GM12878 (cell line): ENCODE measurements at regions of chr3 and their contacts with region 1.

Region 1: DNA sequence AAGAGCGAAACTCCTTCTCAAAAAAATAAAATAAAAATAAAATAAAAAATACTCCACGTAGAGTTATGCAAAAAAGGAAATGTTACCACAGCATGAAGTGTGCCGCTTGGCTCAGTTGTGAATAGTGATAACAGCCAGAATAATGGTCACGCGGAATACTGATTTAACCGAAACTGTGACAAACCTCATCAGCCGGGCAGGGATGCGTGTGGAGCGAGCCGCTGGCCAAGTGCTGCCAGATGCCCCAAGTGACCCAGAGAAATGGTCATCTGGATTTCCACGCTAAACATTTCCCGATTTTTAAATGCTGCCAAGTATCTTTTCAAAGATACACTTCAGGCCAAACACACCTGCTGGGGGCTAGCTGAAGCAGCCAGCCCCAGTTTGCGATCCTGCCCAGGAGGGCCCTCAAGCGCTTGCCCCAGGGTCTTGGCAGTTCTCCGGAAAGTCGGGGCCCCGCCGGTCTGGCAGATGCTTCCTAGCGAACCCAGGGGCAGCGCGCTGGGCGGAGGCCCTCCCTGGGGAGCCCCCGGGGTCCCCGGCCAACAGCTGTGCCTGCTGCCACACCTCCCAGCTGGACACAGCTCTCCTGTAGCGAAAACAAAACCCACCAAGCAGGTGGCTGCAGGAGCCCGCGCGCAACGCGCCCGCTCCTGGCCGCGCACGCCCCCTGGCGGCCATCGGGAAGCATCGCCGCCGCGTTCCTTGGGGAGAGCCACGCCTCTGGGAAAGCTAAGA is 35.1 kb downstream of the CMTM6 start:
- DNase-seq: no peak
- ATAC-seq: peak; percentile 80
- H3K4me3 ChIP-seq: peak overlapping the region; percentile 43; the same call in 1 of the 2 replicates
- H3K27ac ChIP-seq: no peak overlapping the region
- H3K4me1 ChIP-seq: peaks cover 39% of the 10 kb centered on the region
- H3K27me3 ChIP-seq: no peaks in the 10 kb centered on the region
- CTCF ChIP-seq: peak; percentile 95 to 96 (median 96); a peak in 5 of 6 replicates
- EP300 ChIP-seq: no peak
- POLR2A ChIP-seq: no peak
- RAD21 ChIP-seq: peak; percentile 96

Region 2: GRCh38 chr3:32374788-32375595 is 92.5 kb before region 1 on chr3:
- CTCF ChIA-PET with region 1: interaction called, 201 read pairs
- POLR2A ChIA-PET with region 1: interaction called, 5 read pairs
- RAD21 ChIA-PET with region 1: interaction called, 121 read pairs
- SMC1A ChIA-PET with region 1: interaction called, 106 read pairs
- in situ Hi-C with region 1: loop called (anchors 5 kb)
- intact Hi-C with region 1: loop called (anchors 1 kb)
- DNase-seq: peak; percentile 42
- ATAC-seq: peak; percentile 92
- H3K4me3 ChIP-seq: no peak overlapping the region
- H3K27ac ChIP-seq: no peak overlapping the region
- H3K4me1 ChIP-seq: peaks cover 4% of the 10 kb centered on the region; the same call in 1 of the 2 replicates
- H3K27me3 ChIP-seq: peaks cover 0 to 3% of the 10 kb centered on the region in 2 experiments; a peak in 1 of 4 replicates
- CTCF ChIP-seq: peak; percentile 55 to 60 (median 59); a peak in 5 of 6 replicates
- EP300 ChIP-seq: no peak
- POLR2A ChIP-seq: no peak
- RAD21 ChIP-seq: peak; percentile 75

Region 3: DNA sequence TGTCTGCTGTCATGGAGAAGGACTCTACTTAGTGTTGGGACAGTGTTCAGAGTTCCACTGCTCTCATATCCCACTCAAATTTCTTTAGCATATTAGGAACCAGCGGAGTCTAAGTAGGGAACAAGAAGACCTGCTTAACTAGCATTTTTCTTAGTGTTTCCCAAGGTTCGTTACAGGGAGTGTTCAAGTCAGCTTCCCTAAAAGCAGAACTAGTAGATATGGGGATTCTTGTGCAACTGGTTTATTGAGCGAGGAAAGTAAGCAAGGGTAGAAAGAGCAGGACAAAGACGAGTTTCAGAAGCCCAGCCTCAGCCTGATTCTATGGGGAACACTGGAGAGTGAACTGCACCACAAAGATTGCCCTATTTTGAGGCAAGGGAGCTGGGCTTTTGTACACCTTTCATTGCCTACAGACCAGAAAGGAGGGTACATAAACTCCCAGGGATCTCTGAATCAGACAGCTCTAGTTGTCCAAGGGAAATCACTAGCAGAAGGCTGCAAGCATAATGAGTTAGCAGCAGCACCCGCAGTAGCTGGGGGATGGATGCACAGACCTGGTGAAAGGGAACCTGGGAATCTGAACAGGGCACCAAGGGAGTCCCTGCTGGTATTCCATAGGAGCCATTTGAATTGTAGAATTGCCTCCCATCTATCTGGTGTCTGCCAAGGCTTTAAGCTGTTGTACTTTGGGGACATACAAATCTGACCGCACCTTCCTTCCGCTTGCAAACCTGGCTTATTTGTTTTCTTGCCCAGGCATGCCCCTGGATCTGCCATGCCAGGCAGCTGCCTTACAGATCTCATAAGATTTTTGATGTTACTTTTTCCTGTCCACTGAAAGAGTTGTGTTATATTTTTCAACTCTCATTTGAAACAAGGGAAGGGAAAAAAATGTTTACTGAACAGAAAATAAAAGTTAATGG is 60.8 kb before region 1 on chr3:
- CTCF ChIA-PET with region 1: interaction called, 22 read pairs
- POLR2A ChIA-PET with region 1: interaction called, 3 read pairs
- RAD21 ChIA-PET with region 1: interaction called, 4 read pairs
- SMC1A ChIA-PET with region 1: interaction called, 4 read pairs
- in situ Hi-C with region 1: no loop called
- intact Hi-C with region 1: loop called (anchors 2 kb)
- DNase-seq: no peak
- ATAC-seq: no peak
- H3K4me3 ChIP-seq: no peak overlapping the region
- H3K27ac ChIP-seq: no peak overlapping the region
- H3K4me1 ChIP-seq: no peaks in the 10 kb centered on the region; the same call in 1 of the 2 replicates
- H3K27me3 ChIP-seq: no peaks in the 10 kb centered on the region
- CTCF ChIP-seq: no peak
- EP300 ChIP-seq: no peak
- POLR2A ChIP-seq: no peak
- RAD21 ChIP-seq: no peak

Region 4: GRCh38 chr3:32428092-32429068 is 39.1 kb before region 1 on chr3:
- CTCF ChIA-PET with region 1: interaction called, 88 read pairs
- POLR2A ChIA-PET with region 1: interaction called, 5 read pairs
- RAD21 ChIA-PET with region 1: interaction called, 67 read pairs
- SMC1A ChIA-PET with region 1: interaction called, 36 read pairs
- in situ Hi-C with region 1: no loop called
- intact Hi-C with region 1: loop called (anchors 2 kb)
- DNase-seq: no peak
- ATAC-seq: peak; percentile 81
- H3K4me3 ChIP-seq: no peak overlapping the region
- H3K27ac ChIP-seq: no peak overlapping the region
- H3K4me1 ChIP-seq: peaks cover 39% of the 10 kb centered on the region
- H3K27me3 ChIP-seq: no peaks in the 10 kb centered on the region; a peak in 1 of 4 replicates
- CTCF ChIP-seq: no peak
- EP300 ChIP-seq: peak; percentile 71 to 83; a peak in 2 of 4 replicates
- POLR2A ChIP-seq: no peak
- RAD21 ChIP-seq: no peak

Region 5: GRCh38 chr3:32493437-32494414 is 26.2 kb after region 1 on chr3:
- CTCF ChIA-PET with region 1: interaction called, 41 read pairs
- POLR2A ChIA-PET with region 1: interaction called, 8 read pairs
- RAD21 ChIA-PET with region 1: interaction called, 27 read pairs
- SMC1A ChIA-PET with region 1: interaction called, 61 read pairs
- in situ Hi-C with region 1: no loop called
- intact Hi-C with region 1: loop called (anchors 2 kb)
- DNase-seq: no peak
- ATAC-seq: peak; percentile 77
- H3K4me3 ChIP-seq: 0 out of 2 replicates have a peak overlapping the region, but pooled peaks have one; percentile 13
- H3K27ac ChIP-seq: no peak overlapping the region; the same call in 1 of the 2 replicates
- H3K4me1 ChIP-seq: peaks cover 23% of the 10 kb centered on the region
- H3K27me3 ChIP-seq: no peaks in the 10 kb centered on the region
- CTCF ChIP-seq: no peak
- EP300 ChIP-seq: peak; percentile 74 to 83; a peak in 3 of 4 replicates
- POLR2A ChIP-seq: no peak
- RAD21 ChIP-seq: no peak